SK-N-SH (cell line): ENCODE measurements at regions of chr6 and their contacts with region 1.

Region 1: GRCh38 chr6:63690221-63690620 is 54.6 kb downstream of the PHF3 start:
- DNase-seq: no peak
- H3K4me3 ChIP-seq: no peak overlapping the region
- H3K27ac ChIP-seq: no peak overlapping the region
- H3K4me1 ChIP-seq: no peaks in the 10 kb centered on the region
- H3K27me3 ChIP-seq: no peaks in the 10 kb centered on the region
- CTCF ChIP-seq: no peak
- EP300 ChIP-seq: no peak
- RAD21 ChIP-seq: no peak

Region 2: GRCh38 chr6:63705707-63706106 is 15.5 kb after region 1 on chr6:
- CTCF ChIA-PET with region 1: interaction called, 12 read pairs
- POLR2A ChIA-PET with region 1: no interaction called
- DNase-seq: no peak
- H3K4me3 ChIP-seq: no peak overlapping the region
- H3K27ac ChIP-seq: no peak overlapping the region
- H3K4me1 ChIP-seq: no peaks in the 10 kb centered on the region
- H3K27me3 ChIP-seq: no peaks in the 10 kb centered on the region
- CTCF ChIP-seq: no peak
- EP300 ChIP-seq: no peak
- RAD21 ChIP-seq: no peak

Region 3: GRCh38 chr6:63844287-63844686 is 154.1 kb after region 1 on chr6:
- CTCF ChIA-PET with region 1: no interaction called
- POLR2A ChIA-PET with region 1: no interaction called
- DNase-seq: no peak
- H3K4me3 ChIP-seq: no peak overlapping the region
- H3K27ac ChIP-seq: no peak overlapping the region
- H3K4me1 ChIP-seq: no peaks in the 10 kb centered on the region
- H3K27me3 ChIP-seq: no peaks in the 10 kb centered on the region
- CTCF ChIP-seq: no peak
- EP300 ChIP-seq: no peak
- RAD21 ChIP-seq: no peak